PC-3 (cell line): ENCODE measurements at regions of chr13 and their contacts with region 1.

Region 1: DNA sequence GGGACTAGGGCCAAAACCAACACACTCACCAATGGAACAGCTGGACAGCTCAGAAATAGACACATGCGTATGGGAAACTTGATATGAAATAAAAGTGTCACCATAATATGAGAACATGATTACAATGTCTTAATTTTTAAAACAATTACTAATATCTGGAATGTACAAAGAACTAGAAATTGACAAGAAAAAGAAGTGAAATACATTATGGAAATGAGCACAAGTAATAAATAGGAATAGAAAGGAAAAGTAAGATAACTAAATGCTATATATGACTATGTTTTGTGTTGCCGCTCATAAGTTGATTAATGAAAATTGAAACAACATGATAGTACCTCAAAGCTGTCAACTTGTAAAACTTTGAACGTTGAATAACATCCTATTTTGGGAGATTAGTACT is 801.1 kb downstream of the SLITRK5 start:
- DNase-seq: no peak
- ATAC-seq: no peak
- H3K4me3 ChIP-seq: no peak overlapping the region
- H3K27ac ChIP-seq: no peak overlapping the region
- H3K4me1 ChIP-seq: no peaks in the 10 kb centered on the region
- H3K27me3 ChIP-seq: no peaks in the 10 kb centered on the region
- CTCF ChIP-seq: no peak

Region 2: GRCh38 chr13:88281841-88282240 is 190.5 kb before region 1 on chr13:
- CTCF ChIA-PET with region 1: no interaction called
- POLR2A ChIA-PET with region 1: interaction called, 10 read pairs
- intact Hi-C with region 1: no loop called
- DNase-seq: no peak
- ATAC-seq: no peak
- H3K4me3 ChIP-seq: no peak overlapping the region
- H3K27ac ChIP-seq: no peak overlapping the region
- H3K4me1 ChIP-seq: no peaks in the 10 kb centered on the region
- H3K27me3 ChIP-seq: no peaks in the 10 kb centered on the region
- CTCF ChIP-seq: no peak

Region 3: GRCh38 chr13:88592105-88592504 is 119.8 kb after region 1 on chr13:
- CTCF ChIA-PET with region 1: no interaction called
- POLR2A ChIA-PET with region 1: no interaction called
- intact Hi-C with region 1: no loop called
- DNase-seq: no peak
- ATAC-seq: no peak
- H3K4me3 ChIP-seq: no peak overlapping the region
- H3K27ac ChIP-seq: no peak overlapping the region
- H3K4me1 ChIP-seq: no peaks in the 10 kb centered on the region
- H3K27me3 ChIP-seq: no peaks in the 10 kb centered on the region
- CTCF ChIP-seq: no peak